ENCODE measurements at regions of chr10 and their contacts with region 1.

Region 1: GRCh38 chr10:14032395-14032998 is 298.2 kb downstream of the FRMD4A start:
- DNase-seq: peak in 1 of 2 donors; percentile 51
- ATAC-seq: peak in 3 of 8 donors; percentile 17 to 34 (median 29)
- H3K4me3 ChIP-seq: no peak overlapping the region
- H3K27ac ChIP-seq: no peak overlapping the region
- H3K4me1 ChIP-seq: peaks cover 0 to 6% (median 0%) of the 10 kb centered on the region in 9 donors
- H3K27me3 ChIP-seq: peaks cover 0 to 7% (median 0%) of the 10 kb centered on the region in 7 donors
- CTCF ChIP-seq: peak; percentile 45 to 82 (median 69)

Region 2: GRCh38 chr10:13816195-13816926 is 216.1 kb before region 1 on chr10:
- intact Hi-C with region 1: no loop called
- DNase-seq: peak; percentile 79 to 82
- ATAC-seq: peak; percentile 78 to 89 (median 84)
- H3K4me3 ChIP-seq: no peak overlapping the region
- H3K27ac ChIP-seq: peak overlapping the region in 7 of 10 donors; percentile 28 to 74 (median 51)
- H3K4me1 ChIP-seq: peaks cover 0 to 49% (median 33%) of the 10 kb centered on the region in 9 donors
- H3K27me3 ChIP-seq: no peaks in the 10 kb centered on the region
- CTCF ChIP-seq: no peak

Region 3: DNA sequence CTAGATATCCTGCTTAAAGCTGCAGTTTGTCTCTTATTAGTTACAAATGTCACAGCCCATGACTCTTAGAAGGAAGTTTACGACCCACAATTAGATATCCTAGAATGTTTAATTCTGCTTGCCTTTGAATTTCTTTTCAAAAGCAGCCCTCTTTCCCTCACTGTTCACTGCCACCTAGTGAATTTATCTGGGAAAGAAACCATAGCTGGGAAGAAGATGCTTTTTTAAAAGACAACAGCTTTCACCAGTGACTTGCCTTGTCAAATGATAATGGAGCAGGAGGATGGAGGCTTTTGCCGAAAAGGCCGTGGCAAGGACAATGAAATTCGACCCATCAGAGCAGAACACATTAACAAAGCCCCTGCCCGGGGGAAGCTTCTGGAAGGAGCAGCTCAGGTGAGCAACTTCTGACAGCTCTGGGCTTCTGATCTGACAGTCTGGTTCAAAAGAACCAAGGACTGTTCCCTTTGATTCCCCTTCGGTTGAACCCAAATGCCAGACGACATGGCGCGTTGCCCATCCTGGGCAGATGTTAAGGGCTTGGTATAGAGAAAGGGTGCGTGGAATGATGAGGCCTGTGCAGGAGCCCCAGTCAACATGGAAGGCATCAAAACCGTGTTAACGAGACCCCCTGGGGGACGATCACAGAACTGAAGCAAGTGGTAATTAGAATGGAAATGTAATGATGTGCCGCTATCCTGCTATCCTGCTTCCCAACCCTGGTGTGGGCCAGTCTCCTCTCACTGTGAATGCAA is 61.4 kb after region 1 on chr10:
- intact Hi-C with region 1: loop called in 1 of 10 experiments (anchors 5 kb)
- DNase-seq: no peak
- ATAC-seq: peak in 6 of 8 donors; percentile 25 to 63 (median 44)
- H3K4me3 ChIP-seq: no peak overlapping the region
- H3K27ac ChIP-seq: no peak overlapping the region
- H3K4me1 ChIP-seq: peaks cover 0 to 12% (median 5%) of the 10 kb centered on the region in 9 donors
- H3K27me3 ChIP-seq: no peaks in the 10 kb centered on the region
- CTCF ChIP-seq: peak; percentile 22 to 73 (median 62)